Heart left ventricle (tissue), 16 donors: ENCODE measurements at regions of chr12 and their contacts with region 1.

Region 1: DNA sequence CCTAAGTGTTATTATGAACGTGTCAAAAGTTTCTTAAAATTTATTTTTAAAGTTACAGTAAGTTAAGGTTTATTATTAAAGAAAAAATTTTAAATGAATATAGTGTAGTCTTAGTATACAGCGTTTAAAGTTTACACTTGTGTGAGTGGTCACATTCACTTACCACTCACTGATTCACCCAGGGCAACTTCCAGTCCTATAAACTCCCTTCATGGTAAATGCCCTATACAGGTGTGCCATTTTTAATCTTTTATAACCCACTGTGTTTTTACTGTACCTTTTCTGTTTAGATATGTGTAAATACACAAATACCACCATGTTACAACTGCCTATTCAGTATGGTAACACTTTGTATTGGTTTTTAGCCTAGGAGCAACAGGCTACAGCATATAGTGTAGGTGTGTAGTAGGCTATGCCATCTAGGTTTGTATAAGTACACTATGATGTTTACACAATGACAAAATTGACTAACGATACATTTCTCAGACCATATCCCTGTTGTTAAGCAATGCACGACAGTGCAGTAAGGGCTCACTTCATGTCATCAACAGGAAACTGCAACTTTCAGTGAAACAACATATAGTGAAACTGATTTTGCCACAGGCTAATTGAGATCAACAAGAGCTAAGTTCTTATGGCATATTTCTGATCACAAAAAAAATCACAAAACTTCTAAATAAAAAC is 112.0 kb upstream of the TMCC3 start:
- DNase-seq: no peak
- ATAC-seq: no peak
- H3K4me3 ChIP-seq: no peak overlapping the region
- H3K27ac ChIP-seq: no peak overlapping the region
- H3K4me1 ChIP-seq: peaks cover 0 to 2% (median 0%) of the 10 kb centered on the region in 12 donors
- H3K27me3 ChIP-seq: peaks cover 0 to 6% (median 0%) of the 10 kb centered on the region in 9 donors
- CTCF ChIP-seq: no peak
- POLR2A ChIP-seq: no peak

Region 2: DNA sequence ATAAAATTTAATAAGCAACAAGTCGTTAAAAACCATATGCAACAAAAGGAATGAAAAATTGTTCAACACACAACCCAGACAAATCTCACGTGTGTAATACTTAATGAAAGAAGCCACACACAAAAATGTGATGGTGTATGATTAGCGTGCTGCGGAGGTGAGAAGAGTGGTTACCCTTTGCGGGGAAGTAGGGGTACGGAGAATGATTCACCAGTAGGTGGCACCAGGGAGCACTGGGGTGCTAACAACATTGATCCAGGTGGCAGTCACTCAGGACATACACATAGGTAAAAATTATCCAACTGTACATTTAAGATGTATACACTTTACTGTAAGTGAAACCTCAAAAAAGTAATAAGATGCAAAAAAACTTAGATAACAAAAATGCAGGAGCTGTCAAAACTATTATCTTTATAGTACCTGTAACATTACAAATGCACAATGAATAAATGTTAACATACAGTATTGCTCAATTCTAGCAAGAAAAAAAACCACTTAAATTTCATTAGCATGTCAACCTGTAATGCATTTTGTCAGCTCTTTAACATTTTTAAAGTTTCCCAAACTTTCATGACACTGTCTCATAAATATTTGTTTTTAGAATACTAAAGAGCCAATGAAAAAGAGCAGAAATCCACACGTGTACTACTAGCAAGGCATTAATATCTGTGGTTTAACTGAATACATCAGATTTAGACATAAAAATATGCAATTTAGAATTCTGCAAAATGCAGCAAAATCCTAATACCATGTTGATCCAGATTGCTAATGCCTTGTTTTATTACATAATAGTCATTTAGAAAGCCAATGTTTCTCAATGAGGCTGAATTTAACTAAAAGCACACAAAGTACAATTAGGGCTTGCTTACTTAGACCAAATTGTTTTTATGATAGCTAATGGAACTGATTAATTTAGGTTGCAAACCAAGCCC is 158.7 kb before region 1 on chr12:
- intact Hi-C with region 1: loop called in 4 of 10 experiments (anchors 5 to 10 kb)
- DNase-seq: peak in 1 of 5 donors; percentile 36
- ATAC-seq: peak in 1 of 4 donors; percentile 44
- H3K4me3 ChIP-seq: no peak overlapping the region
- H3K27ac ChIP-seq: no peak overlapping the region
- H3K4me1 ChIP-seq: peaks cover 0 to 6% (median 0%) of the 10 kb centered on the region in 12 donors
- H3K27me3 ChIP-seq: no peaks in the 10 kb centered on the region
- CTCF ChIP-seq: peak; percentile 44 to 72 (median 62)
- POLR2A ChIP-seq: no peak

Region 3: GRCh38 chr12:94663702-94664101 is 98.7 kb before region 1 on chr12:
- intact Hi-C with region 1: no loop called
- DNase-seq: no peak
- ATAC-seq: peak in 1 of 4 donors; percentile 46
- H3K4me3 ChIP-seq: no peak overlapping the region
- H3K27ac ChIP-seq: no peak overlapping the region
- H3K4me1 ChIP-seq: peaks cover 0 to 11% (median 0%) of the 10 kb centered on the region in 12 donors
- H3K27me3 ChIP-seq: no peaks in the 10 kb centered on the region
- CTCF ChIP-seq: no peak
- POLR2A ChIP-seq: no peak